ENCODE measurements at regions of chr1 and their contacts with region 1.

Region 1: GRCh38 chr1:193434319-193434718 is 247.9 kb upstream of the B3GALT2 start:
- DNase-seq: no peak
- H3K4me3 Mint-ChIP-seq: no peak overlapping the region
- H3K27ac Mint-ChIP-seq: no peak overlapping the region
- H3K4me1 Mint-ChIP-seq: peaks cover 18% of the 10 kb centered on the region
- H3K27me3 Mint-ChIP-seq: no peaks in the 10 kb centered on the region

Region 2: DNA sequence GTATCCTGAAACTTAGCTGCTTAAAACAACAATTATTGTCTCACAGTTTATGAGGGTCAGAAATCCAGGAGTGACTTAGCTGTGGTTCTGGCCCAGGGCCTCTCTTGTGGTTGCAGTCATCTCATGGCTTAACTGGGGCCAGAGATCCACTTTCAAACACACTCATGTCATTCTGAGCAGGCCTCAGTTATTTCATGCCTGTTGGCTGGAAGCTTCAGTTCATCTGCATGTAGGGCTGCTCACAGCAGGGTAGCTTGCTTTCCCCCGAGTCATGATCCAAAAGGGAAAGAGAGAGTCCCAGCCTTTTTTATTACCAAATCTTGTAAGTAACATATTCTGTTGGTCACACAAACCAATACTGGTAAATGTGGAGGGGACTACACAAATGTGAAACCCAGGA is 151.3 kb before region 1 on chr1:
- CTCF ChIA-PET with region 1: no interaction called
- POLR2A ChIA-PET with region 1: no interaction called
- intact Hi-C with region 1: no loop called
- DNase-seq: no peak
- H3K4me3 Mint-ChIP-seq: no peak overlapping the region
- H3K27ac Mint-ChIP-seq: no peak overlapping the region
- H3K4me1 Mint-ChIP-seq: peaks cover 8% of the 10 kb centered on the region
- H3K27me3 Mint-ChIP-seq: no peaks in the 10 kb centered on the region

Region 3: DNA sequence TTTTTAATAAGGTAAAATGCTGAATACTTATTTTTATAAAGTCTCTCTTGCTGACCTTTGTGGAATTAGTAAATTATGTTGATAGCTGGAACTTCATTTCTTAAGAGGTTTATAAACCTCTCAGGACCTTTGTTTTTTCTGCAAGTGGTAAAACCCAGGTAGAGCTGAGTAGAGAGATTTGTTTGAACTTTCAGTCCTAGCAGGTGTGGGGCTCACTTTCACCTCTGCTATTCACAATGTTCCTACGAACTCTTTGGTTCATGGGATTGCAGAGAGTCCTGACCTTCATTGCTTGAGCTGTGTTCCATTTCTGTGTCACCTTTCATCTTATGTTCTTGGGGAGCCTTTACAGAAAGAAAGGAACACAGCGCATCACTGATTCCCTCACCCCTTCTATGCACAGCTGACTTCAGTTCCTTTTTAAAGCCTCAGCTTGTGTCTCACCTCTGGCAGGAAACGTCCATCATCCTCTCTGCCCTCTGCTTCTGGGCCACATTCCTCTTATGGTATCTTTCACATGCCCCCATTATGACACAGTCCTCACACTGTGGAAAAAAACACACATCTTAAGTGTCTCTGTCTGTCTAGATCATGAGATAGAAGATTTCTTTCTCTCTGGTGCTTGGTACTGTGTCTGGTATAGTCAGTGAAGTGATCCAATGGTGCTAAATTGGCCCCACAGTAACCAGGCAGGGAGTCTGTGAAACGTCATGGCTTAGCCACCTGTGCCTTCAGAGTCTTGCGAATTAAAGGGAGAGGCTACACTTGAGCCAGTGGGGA is 14.6 kb after region 1 on chr1:
- CTCF ChIA-PET with region 1: no interaction called
- POLR2A ChIA-PET with region 1: no interaction called
- intact Hi-C with region 1: loop called (anchors 2 kb)
- DNase-seq: peak; percentile 44
- H3K4me3 Mint-ChIP-seq: peak overlapping the region; percentile 1
- H3K27ac Mint-ChIP-seq: peak overlapping the region; percentile 80
- H3K4me1 Mint-ChIP-seq: peaks cover 22% of the 10 kb centered on the region
- H3K27me3 Mint-ChIP-seq: no peaks in the 10 kb centered on the region

Measured in activated CD4-positive, alpha-beta memory T cell treated with anti-CD3 and anti-CD28 coated beads for 36 hours (primary cell).